Natural killer cell (primary cell): ENCODE measurements at regions of chr19 and their contacts with region 1.

Region 1: GRCh38 chr19:12287958-12288500 is 6.7 kb downstream of the ZNF44 start:
- DNase-seq: no peak
- ATAC-seq: no peak
- H3K4me3 ChIP-seq: no peak overlapping the region
- H3K4me3 Mint-ChIP-seq: no peak overlapping the region
- H3K27ac ChIP-seq: peak overlapping the region; percentile 31
- H3K27ac Mint-ChIP-seq: peak overlapping the region; percentile 81 to 93
- H3K4me1 ChIP-seq: peaks cover 23% of the 10 kb centered on the region
- H3K4me1 Mint-ChIP-seq: peaks cover 39 to 43% of the 10 kb centered on the region in 2 donors
- H3K27me3 ChIP-seq: no peaks in the 10 kb centered on the region
- H3K27me3 Mint-ChIP-seq: no peaks in the 10 kb centered on the region
- CTCF ChIP-seq: no peak

Region 2: GRCh38 chr19:12187625-12188024 is 100.4 kb before region 1 on chr19:
- intact Hi-C with region 1: loop called (anchors 10 kb)
- DNase-seq: no peak
- ATAC-seq: no peak
- H3K4me3 ChIP-seq: no peak overlapping the region
- H3K4me3 Mint-ChIP-seq: no peak overlapping the region
- H3K27ac ChIP-seq: no peak overlapping the region
- H3K27ac Mint-ChIP-seq: no peak overlapping the region
- H3K4me1 ChIP-seq: no peaks in the 10 kb centered on the region
- H3K4me1 Mint-ChIP-seq: peaks cover under 1 to 4% of the 10 kb centered on the region in 2 donors
- H3K27me3 ChIP-seq: no peaks in the 10 kb centered on the region
- H3K27me3 Mint-ChIP-seq: no peaks in the 10 kb centered on the region
- CTCF ChIP-seq: no peak

Region 3: GRCh38 chr19:12272980-12273901 is 14.8 kb before region 1 on chr19:
- intact Hi-C with region 1: no loop called
- DNase-seq: no peak
- ATAC-seq: no peak
- H3K4me3 ChIP-seq: no peak overlapping the region
- H3K4me3 Mint-ChIP-seq: no peak overlapping the region
- H3K27ac ChIP-seq: no peak overlapping the region
- H3K27ac Mint-ChIP-seq: peak overlapping the region in 1 of 2 donors; percentile 31
- H3K4me1 ChIP-seq: peaks cover 1% of the 10 kb centered on the region
- H3K4me1 Mint-ChIP-seq: peaks cover 23 to 26% of the 10 kb centered on the region in 2 donors
- H3K27me3 ChIP-seq: no peaks in the 10 kb centered on the region
- H3K27me3 Mint-ChIP-seq: no peaks in the 10 kb centered on the region
- CTCF ChIP-seq: no peak